Aorta (tissue), 5 donors: ENCODE measurements at regions of chr4 and their contacts with region 1.

Region 1: DNA sequence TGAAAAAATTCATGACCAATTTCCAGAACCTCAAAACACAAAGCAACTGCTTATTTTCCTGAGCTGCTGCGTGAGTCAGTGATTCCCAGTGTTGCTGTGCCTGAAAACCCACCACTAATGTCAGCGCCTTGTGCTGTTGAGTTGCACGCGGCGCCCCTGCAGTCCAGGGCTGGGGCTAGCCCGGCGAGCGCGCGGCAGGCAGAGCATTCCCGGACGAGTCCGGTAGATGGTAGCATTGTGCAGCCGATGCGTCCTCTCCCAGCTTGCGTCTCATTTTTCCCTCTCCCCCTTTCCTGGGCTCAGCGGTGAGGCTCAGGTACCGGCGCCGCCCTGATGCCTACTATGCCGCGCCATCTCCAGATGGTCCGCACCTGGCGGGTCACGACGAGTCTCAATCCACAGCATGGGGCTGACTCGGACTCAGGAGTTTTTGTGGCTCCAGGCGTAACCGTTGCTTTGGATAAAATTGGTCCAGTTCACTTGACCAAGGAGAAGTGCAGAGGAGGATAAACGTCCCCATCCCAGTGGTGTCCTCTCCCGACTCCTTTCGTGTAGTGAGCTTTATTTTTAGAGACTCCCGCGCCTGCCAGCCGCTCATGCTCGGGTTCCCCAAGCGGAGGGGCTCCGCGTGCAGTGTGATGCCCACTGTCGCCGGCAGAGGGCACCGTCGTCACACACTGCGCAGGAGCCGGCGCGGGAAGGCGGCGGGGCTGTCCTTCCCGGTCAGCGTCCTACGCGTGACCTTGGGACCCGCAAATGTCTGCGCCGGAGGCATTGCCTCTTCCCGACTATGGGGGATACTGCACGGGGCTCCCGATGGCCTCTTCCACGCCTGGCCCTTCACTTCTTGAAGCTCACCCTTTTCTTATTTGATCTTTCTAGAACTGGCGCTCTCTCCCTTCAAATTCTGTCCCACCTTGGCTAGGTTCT is 53.6 kb upstream of the IGFBP7 start:
- DNase-seq: peak; percentile 86 to 94
- ATAC-seq: peak; percentile 97
- H3K4me3 ChIP-seq: peak overlapping the region; percentile 52 to 58
- H3K27ac ChIP-seq: no peak overlapping the region
- H3K4me1 ChIP-seq: no peaks in the 10 kb centered on the region
- H3K27me3 ChIP-seq: no peaks in the 10 kb centered on the region

Region 2: GRCh38 chr4:57037982-57038604 is 125.7 kb before region 1 on chr4:
- intact Hi-C with region 1: loop called (anchors 5 kb)
- DNase-seq: peak; percentile 67 to 91
- ATAC-seq: peak; percentile 70
- H3K4me3 ChIP-seq: no peak overlapping the region
- H3K27ac ChIP-seq: peak overlapping the region in 1 of 2 donors; percentile 16
- H3K4me1 ChIP-seq: peaks cover 0 to 5% of the 10 kb centered on the region in 2 donors
- H3K27me3 ChIP-seq: no peaks in the 10 kb centered on the region

Region 3: DNA sequence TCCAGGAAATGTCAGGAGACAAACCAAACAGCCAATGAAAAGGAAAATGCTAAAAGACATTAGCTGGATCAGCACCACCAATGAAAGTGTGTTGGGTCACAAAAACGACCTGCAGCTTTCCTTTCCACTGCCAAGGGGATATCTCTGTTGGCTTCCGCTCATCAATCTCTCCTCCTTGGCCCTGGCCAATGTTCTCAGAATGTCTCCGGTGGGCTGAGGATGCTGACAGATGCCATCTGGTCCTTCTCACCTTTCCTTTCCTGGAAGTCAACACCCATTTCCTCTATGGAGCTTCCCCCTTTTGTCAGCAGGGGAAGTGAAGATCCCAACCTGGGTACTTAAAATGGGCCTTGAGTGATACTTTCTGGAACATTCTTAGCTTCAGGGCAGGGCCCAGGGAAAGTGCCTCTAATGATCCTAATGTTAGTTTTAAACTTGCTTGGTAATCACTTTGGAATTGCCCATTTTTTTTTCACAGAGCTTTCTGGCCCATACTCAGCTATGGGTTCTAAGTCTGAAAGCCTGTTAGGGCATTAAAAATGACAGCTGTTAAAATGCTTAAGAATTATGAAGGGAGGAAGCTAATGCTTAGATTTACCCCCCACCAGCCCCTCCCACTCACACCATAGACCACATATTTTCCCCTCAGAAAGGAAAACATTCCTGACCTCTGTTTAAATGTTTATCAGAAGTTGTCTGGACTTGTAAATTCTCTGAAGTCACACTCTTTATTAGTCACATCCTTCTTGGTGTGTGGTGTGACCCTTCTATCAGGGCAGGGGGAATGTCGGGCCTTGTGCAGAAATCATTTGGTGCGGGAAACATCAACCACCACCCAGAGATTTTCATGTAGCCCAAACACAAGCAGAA is 82.8 kb before region 1 on chr4:
- intact Hi-C with region 1: no loop called
- DNase-seq: peak; percentile 76 to 78
- ATAC-seq: peak; percentile 68
- H3K4me3 ChIP-seq: no peak overlapping the region
- H3K27ac ChIP-seq: peak overlapping the region; percentile 99 to 100
- H3K4me1 ChIP-seq: peaks cover 2 to 16% of the 10 kb centered on the region in 2 donors
- H3K27me3 ChIP-seq: no peaks in the 10 kb centered on the region

Region 4: DNA sequence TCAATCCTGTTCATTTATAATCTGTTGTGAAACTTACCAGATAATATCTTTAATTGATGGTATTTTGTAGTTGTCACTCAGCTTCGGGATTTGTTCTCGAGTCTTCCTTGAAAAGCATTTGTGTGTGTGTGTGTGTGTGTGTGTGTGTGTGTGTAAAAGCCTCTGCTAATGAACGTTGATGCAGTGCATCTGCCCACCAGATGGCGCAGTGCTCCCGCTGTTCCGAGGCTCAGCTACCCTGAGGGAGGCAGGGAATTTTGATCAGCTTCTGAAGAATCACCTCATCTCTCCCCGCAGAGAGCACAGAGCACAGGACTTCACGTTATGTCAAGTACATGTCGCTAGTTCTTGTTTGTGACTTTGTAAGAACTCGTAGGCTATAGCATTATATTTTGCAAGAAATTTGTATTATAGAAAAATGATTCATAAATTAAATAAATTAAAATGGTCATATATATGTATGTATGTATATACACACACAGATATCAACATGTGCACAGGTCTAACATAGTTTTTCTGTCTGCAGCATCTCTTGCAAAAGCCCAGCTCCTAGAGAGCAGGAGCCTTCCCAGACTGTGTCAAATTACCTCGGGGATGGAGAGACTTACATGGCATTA is 263.1 kb after region 1 on chr4:
- intact Hi-C with region 1: loop called in 1 of 2 experiments (anchors 5 kb)
- DNase-seq: peak; percentile 76 to 92
- ATAC-seq: peak; percentile 76
- H3K4me3 ChIP-seq: no peak overlapping the region
- H3K27ac ChIP-seq: no peak overlapping the region
- H3K4me1 ChIP-seq: peaks cover 3 to 6% of the 10 kb centered on the region in 2 donors
- H3K27me3 ChIP-seq: no peaks in the 10 kb centered on the region

Region 5: GRCh38 chr4:58061970-58062369 is 898.2 kb after region 1 on chr4:
- intact Hi-C with region 1: loop called in 1 of 2 experiments (anchors 5 kb)
- DNase-seq: no peak
- ATAC-seq: no peak
- H3K4me3 ChIP-seq: no peak overlapping the region
- H3K27ac ChIP-seq: no peak overlapping the region
- H3K4me1 ChIP-seq: no peaks in the 10 kb centered on the region
- H3K27me3 ChIP-seq: no peaks in the 10 kb centered on the region